ENCODE measurements at regions of chr14 and their contacts with region 1.

Region 1: DNA sequence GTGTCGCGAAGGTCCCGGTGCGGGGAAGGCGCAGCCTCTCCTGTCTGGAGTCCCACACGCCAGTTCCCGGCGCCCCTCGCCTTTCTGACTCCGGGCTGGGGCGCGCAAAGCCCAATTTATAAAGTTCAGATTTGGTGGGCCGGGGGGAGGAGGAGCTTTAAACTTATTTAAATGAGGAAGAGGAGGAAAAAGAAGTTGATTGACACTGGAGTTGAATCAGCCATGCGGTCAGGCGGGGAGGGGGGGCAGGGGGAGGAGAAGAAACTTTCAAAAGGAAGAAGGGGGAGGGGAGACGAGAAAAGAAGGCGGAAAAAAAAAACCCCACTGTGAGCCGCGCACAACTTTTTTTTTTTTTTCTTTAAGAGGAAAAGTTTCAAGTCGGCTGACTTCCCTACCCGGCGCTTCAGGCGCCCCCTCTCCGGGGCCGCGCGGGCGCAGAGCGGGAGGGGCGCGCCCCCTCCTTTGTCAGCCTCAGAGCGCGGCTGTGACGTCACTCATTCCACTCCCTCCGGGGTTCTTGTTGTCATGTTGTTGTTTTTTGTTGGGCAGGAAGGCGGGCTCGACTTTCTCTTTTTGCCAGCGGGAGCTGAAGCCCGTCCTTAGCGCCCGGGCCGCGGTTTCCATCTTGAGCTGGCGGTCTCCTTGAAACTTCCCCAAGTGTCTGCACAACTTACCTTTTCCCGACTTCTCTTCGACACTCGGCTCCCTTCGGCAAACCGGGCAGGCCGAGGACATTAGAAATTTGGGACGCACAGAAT is at the start of gene ZFP36L1:
- DNase-seq: no peak
- ATAC-seq: peak; percentile 58
- H3K4me3 ChIP-seq: peak within 1 kb of the TSS; percentile 84 to 95
- H3K27ac ChIP-seq: peak within 1 kb of the TSS; percentile 98
- H3K4me1 ChIP-seq: peaks cover 21% of the 10 kb centered on the region
- H3K27me3 ChIP-seq: no peaks in the 10 kb centered on the region
- CTCF ChIP-seq: no peak
- total RNA-seq, gene ZFP36L1: 84.9 TPM

Region 2: DNA sequence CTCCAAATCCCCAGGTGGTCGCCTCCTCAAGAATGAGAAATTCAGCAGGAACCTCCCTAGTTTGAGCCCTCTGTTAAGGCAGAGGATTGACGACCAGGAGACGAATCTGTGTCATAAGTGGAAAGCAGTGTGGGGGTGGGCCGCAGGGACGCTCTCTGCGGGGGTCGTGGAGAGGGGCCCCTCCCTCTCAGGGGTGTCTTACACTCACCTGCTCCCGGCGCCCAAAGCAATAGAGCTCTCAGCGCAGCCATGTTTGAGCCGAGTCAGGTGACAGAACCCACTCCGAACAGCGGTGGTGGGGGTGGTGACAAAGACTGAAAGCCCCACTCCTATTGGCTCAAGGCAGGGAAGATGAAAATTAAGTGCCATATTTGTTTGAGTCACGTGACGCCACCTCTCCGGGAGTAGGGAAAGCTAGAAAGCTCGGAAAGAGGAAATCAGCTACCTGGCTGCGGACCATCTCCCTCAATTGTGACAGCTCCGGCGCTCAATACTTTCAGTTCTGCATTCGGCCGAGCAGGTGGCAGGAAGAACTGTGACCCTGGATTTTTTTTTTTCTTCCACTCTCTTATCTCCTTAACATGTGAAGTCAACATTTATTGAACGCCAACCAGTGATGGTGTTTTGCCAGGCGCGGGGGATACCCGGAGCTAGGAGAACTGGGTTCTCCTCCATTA is 976.7 kb before region 1 on chr14 and contains the start of gene ZFYVE26:
- CTCF ChIA-PET with region 1: no interaction called
- POLR2A ChIA-PET with region 1: interaction called, 10 read pairs
- in situ Hi-C with region 1: no loop called
- intact Hi-C with region 1: no loop called
- DNase-seq: peak; percentile 85
- ATAC-seq: peak; percentile 95
- H3K4me3 ChIP-seq: peak within 1 kb of the TSS; percentile 91 to 93
- H3K27ac ChIP-seq: peak within 1 kb of the TSS; percentile 88
- H3K4me1 ChIP-seq: peaks cover 7% of the 10 kb centered on the region; the same call in 1 of the 2 replicates
- H3K27me3 ChIP-seq: no peaks in the 10 kb centered on the region
- CTCF ChIP-seq: no peak
- total RNA-seq, gene ZFYVE26: 17.3 TPM

Region 3: DNA sequence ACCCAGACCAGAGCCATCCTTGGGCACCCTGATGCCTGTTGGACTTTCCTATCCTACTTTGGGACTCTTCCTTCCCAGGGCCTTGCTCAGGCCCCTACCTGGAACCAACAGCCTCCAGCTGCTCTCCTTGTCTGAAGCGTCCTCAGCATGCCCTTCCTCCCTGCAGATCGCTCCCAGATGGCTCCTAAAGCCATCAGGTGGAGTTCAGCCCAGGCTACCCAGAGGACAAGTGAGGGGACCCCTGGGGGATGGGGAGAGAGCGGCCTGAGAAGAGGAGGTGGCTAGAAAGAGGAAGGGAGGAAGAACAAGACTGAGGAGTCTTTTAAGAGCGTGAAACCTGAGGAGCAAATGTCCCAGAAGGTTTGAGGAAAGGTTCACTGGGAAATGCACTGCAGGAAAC is 236.9 kb before region 1 on chr14:
- CTCF ChIA-PET with region 1: no interaction called
- POLR2A ChIA-PET with region 1: interaction called, 25 read pairs
- in situ Hi-C with region 1: no loop called
- intact Hi-C with region 1: no loop called
- DNase-seq: no peak
- ATAC-seq: no peak
- H3K4me3 ChIP-seq: no peak overlapping the region
- H3K27ac ChIP-seq: no peak overlapping the region
- H3K4me1 ChIP-seq: no peaks in the 10 kb centered on the region
- H3K27me3 ChIP-seq: no peaks in the 10 kb centered on the region
- CTCF ChIP-seq: no peak

Region 4: DNA sequence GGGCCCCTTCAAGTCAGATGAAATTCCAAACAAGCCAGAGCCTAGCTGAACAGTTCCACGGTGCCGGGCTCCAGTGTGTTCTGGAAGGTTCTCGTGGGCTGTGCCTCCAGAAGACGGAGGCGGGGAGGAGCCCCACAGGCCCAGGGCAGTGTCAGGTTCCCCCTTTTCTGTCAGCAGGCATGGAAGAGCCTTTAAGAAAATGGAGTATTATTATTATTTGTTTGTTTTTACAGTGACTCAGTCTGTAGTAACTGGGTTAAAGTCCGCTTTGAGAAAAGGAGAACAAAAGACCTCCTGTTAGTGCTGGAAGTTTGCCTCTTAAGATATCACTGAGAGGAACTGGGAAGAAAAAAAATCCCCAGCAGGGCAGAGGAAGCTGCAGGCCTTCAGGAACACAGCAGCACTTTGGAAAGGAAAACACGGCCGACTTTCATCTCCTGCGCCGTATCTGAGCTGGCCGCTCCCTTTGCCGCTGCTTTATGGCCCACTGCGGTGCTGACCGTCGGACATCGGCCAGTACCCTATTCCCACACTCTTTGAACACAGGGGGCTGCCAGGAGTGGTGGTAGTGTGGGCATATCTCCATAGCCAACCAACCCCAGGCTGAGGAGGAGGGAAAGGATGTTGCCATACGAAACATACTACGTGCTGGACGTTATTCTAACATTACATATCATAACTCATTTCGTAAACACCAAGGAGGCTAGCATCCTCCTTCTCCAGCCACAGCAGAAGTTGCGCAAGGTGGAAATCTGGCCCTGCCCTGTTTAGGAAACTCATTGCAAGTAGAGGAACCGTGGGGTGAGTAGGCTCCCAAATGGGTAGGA is 194.3 kb before region 1 on chr14:
- CTCF ChIA-PET with region 1: no interaction called
- POLR2A ChIA-PET with region 1: no interaction called
- in situ Hi-C with region 1: no loop called
- intact Hi-C with region 1: loop called (anchors 10 kb)
- DNase-seq: peak; percentile 52
- ATAC-seq: peak; percentile 94
- H3K4me3 ChIP-seq: peak overlapping the region in 1 of 2 experiments; percentile 41; a peak in 2 of 4 replicates
- H3K27ac ChIP-seq: peak overlapping the region; percentile 83
- H3K4me1 ChIP-seq: peaks cover 19% of the 10 kb centered on the region
- H3K27me3 ChIP-seq: no peaks in the 10 kb centered on the region
- CTCF ChIP-seq: no peak

Region 5: GRCh38 chr14:68816262-68816942 is 23.2 kb after region 1 on chr14:
- CTCF ChIA-PET with region 1: interaction called, 5 read pairs
- POLR2A ChIA-PET with region 1: interaction called, 19 read pairs
- in situ Hi-C with region 1: no loop called
- intact Hi-C with region 1: no loop called
- DNase-seq: no peak
- ATAC-seq: peak; percentile 89
- H3K4me3 ChIP-seq: peak overlapping the region; percentile 31 to 43
- H3K27ac ChIP-seq: peak overlapping the region; percentile 81
- H3K4me1 ChIP-seq: peaks cover 23% of the 10 kb centered on the region
- H3K27me3 ChIP-seq: no peaks in the 10 kb centered on the region
- CTCF ChIP-seq: peak; percentile 88

Measured in Panc1 (cell line).